Right ventricle myocardium inferior (tissue), 1 donor: ENCODE measurements at regions of chr10 and their contacts with region 1.

Region 1: DNA sequence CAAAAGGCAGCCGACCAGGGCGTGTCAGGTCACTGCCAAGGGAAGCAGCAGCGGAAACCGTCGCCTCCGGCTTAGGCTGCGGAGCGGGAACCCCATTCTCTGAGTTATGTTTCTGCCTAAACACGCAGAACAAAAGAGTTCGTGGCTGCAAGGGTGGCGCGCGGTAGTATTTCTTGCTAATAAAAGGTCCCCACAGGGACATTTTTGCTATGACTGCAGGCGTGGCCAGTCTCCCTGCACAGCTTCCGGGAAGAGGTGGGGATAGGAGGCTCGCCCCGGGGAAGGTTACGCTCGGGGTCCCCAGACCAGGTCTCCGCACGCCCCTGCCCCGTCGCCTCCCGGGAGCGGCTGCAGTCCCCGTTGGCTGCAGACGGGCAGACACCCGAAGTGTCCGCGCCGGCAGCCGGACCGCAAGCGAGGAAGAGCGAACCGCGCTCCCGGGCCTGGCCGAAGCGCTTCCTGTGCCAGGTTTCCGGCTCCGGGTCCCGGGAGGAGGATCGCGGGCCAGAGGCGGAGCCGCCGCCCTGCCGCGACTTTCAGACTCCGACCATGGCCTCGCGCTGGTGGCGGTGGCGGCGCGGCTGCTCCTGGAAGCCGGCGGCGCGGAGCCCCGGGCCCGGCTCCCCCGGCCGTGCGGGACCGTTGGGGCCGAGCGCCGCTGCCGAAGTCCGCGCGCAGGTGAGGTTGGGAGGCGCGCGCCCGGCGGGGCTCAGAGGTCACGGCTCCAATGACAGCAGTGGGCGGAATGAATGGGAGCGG is at the start of gene PDSS1:
- DNase-seq: peak; percentile 93
- ATAC-seq: peak; percentile 95
- total RNA-seq, gene PDSS1: 6.3 TPM

Region 2: GRCh38 chr10:25934621-25935139 is 762.7 kb before region 1 on chr10:
- intact Hi-C with region 1: no loop called
- DNase-seq: no peak
- ATAC-seq: no peak

Region 3: DNA sequence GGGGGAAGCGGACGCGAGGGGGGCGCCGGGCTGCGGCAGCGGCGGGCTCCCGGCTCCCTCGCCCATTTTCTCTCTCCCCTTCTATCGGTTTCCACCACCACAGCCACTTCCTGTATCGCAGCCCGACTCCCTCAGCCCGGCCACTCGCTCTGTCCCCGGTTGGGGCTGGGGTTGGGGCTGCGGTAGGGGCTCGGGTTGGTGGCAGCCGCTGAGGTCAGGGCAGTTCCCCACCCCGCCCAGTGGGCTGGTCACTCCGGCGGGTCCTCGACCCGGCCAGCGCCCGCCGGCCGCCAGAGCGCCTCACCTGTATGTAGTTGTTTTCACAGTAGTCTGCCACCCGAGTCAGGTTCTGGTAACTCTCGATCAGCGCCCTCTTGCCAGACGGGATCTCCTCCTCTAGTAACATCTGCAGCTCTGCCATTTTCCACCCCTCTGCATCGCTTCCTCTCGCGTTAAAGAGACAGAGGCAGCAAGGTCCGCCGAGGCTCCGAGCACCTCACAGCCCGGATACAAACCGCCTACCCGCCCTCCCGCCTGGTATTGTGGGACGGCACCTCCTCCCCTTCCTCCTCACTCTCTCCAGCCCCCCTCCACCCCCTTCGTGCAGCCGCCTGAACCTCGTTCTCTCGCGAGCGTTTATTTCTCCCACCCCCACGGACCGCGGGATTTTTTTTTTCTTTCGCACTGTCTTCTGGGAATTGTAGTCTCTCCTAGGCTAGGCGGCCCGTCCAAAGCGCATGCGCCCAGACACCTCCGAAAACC is 163.3 kb after region 1 on chr10 and contains the start of gene ABI1:
- intact Hi-C with region 1: loop called (anchors 2 kb)
- DNase-seq: peak; percentile 98
- ATAC-seq: peak; percentile 98
- total RNA-seq, gene ABI1: 28.0 TPM